ENCODE measurements at regions of chr7 and their contacts with region 1.

Region 1: GRCh38 chr7:128862571-128863432 is at the start of gene ATP6V1F:
- DNase-seq: peak; percentile 99
- H3K4me3 ChIP-seq: peak within 1 kb of the TSS; percentile 50 to 88 (median 74)
- H3K27ac ChIP-seq: peak within 1 kb of the TSS; percentile 79 to 88 (median 88)
- H3K4me1 ChIP-seq: peaks cover 0 to 33% (median 13%) of the 10 kb centered on the region in 4 donors
- H3K27me3 ChIP-seq: no peaks in the 10 kb centered on the region
- CTCF ChIP-seq: peak in 2 of 5 experiments; percentile 27 to 29
- EP300 ChIP-seq: no peak
- POLR2A ChIP-seq: peak; percentile 80
- total RNA-seq, gene ATP6V1F: 25.5 to 128 (median 63.2) TPM

Region 2: DNA sequence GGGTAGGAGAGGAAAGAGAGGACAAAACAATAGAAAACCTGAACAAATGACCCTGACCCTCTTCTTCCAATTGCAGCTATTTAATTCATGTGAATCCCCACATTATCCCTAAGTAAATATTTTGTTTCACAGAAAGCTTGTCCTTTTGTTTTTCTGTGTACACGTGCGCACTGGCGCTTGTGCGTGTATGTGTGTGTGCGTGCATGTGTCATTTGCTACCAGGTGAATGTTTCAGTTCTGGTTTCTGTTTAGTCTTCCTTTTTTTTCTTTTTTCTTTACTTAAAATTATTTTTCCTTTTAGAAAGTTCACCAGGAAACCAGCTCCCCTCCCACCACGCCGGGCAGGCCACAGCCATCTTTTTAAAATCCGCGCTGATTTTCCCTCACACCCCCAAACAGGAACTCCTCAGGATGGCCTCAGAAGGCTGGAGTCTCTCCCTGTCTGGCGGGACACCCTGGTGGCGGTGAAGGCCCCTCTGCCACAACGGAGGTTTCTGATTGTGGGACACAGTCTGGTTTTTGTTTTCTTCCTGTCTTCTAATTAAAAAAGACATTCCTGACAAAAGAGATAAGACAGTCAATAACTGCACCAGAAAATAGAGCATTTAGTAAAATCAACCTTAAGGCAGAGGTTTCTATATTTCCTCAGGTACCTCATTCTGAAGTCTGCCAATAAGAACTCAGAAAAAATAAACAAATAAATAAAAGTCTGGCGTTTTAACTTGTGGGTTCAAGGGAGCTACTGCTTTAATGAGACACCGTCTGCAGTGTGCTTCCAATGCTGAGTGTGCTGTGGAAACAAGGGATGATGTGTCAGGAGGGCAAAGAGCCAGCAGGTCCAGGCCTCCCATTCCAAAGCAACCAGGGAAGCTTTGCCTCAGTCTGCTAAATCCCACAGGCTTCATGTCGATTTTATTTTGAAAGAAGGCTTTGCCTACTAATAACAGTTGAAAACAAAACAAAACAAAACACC is 92.3 kb after region 1 on chr7:
- in situ Hi-C with region 1: loop called in 1 of 4 experiments (anchors 25 kb)
- intact Hi-C with region 1: no loop called
- DNase-seq: no peak
- H3K4me3 ChIP-seq: no peak overlapping the region
- H3K27ac ChIP-seq: no peak overlapping the region
- H3K4me1 ChIP-seq: no peaks in the 10 kb centered on the region
- H3K27me3 ChIP-seq: no peaks in the 10 kb centered on the region
- CTCF ChIP-seq: no peak
- EP300 ChIP-seq: no peak
- POLR2A ChIP-seq: no peak

Region 3: GRCh38 chr7:128986609-128987008 is 123.8 kb after region 1 on chr7:
- in situ Hi-C with region 1: no loop called
- intact Hi-C with region 1: no loop called
- DNase-seq: no peak
- H3K4me3 ChIP-seq: no peak overlapping the region
- H3K27ac ChIP-seq: no peak overlapping the region
- H3K4me1 ChIP-seq: no peaks in the 10 kb centered on the region
- H3K27me3 ChIP-seq: no peaks in the 10 kb centered on the region
- CTCF ChIP-seq: no peak
- EP300 ChIP-seq: no peak
- POLR2A ChIP-seq: no peak

Region 4: GRCh38 chr7:129343099-129343700 is 480.4 kb after region 1 on chr7:
- in situ Hi-C with region 1: no loop called
- intact Hi-C with region 1: no loop called
- DNase-seq: no peak
- H3K4me3 ChIP-seq: no peak overlapping the region
- H3K27ac ChIP-seq: peak overlapping the region in 1 of 4 donors; percentile 6
- H3K4me1 ChIP-seq: peaks cover 0 to 52% (median 24%) of the 10 kb centered on the region in 4 donors
- H3K27me3 ChIP-seq: no peaks in the 10 kb centered on the region
- CTCF ChIP-seq: peak; percentile 64 to 75 (median 70)
- EP300 ChIP-seq: no peak
- POLR2A ChIP-seq: no peak

Measured in transverse colon (tissue), 4 donors.